ENCODE measurements at regions of chr7 and their contacts with region 1.

Region 1: DNA sequence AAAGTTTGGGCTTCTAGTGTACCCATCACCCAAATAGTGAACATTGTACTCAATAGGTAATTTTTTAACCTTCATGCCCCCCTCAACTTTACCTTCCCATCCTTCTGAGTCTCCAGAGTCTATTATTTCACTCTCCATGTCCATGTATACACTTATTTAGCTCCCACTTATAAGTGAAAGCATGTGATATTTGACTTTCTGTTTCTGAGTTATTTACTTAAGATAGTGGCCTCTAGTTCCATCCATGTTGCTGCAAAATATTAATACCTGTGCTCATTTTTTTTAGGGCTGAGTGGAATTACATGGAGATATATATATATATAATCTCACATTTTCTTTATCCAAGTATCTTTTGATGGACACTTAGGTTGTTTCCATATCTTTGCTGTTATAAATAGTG is 21.1 kb upstream of the PHF14 start:
- DNase-seq: no peak
- ATAC-seq: no peak
- H3K4me3 ChIP-seq: no peak overlapping the region
- H3K4me3 Mint-ChIP-seq: no peak overlapping the region
- H3K27ac ChIP-seq: no peak overlapping the region
- H3K27ac Mint-ChIP-seq: no peak overlapping the region
- H3K4me1 ChIP-seq: no peaks in the 10 kb centered on the region
- H3K4me1 Mint-ChIP-seq: no peaks in the 10 kb centered on the region
- H3K27me3 ChIP-seq: peaks cover 0 to 4% of the 10 kb centered on the region in 2 experiments
- H3K27me3 Mint-ChIP-seq: peaks cover 5 to 9% of the 10 kb centered on the region in 2 donors

Region 2: GRCh38 chr7:11221984-11222383 is 269.4 kb after region 1 on chr7:
- CTCF ChIA-PET with region 1: no interaction called
- POLR2A ChIA-PET with region 1: interaction called in 1 of 2 experiments, 12 read pairs
- DNase-seq: no peak
- ATAC-seq: no peak
- H3K4me3 ChIP-seq: no peak overlapping the region
- H3K4me3 Mint-ChIP-seq: no peak overlapping the region
- H3K27ac ChIP-seq: no peak overlapping the region
- H3K27ac Mint-ChIP-seq: no peak overlapping the region
- H3K4me1 ChIP-seq: no peaks in the 10 kb centered on the region
- H3K4me1 Mint-ChIP-seq: no peaks in the 10 kb centered on the region
- H3K27me3 ChIP-seq: no peaks in the 10 kb centered on the region
- H3K27me3 Mint-ChIP-seq: peaks cover 0 to 12% of the 10 kb centered on the region in 2 donors